ENCODE measurements at regions of chr10 and their contacts with region 1.

Region 1: GRCh38 chr10:12369982-12370381 is 20.6 kb downstream of the CAMK1D start:
- DNase-seq: no peak
- H3K4me3 Mint-ChIP-seq: no peak overlapping the region
- H3K27ac Mint-ChIP-seq: no peak overlapping the region
- H3K4me1 Mint-ChIP-seq: peaks cover 17% of the 10 kb centered on the region
- H3K27me3 Mint-ChIP-seq: no peaks in the 10 kb centered on the region

Region 2: GRCh38 chr10:11724938-11725776 is 644.8 kb before region 1 on chr10:
- intact Hi-C with region 1: loop called (anchors 5 kb)
- DNase-seq: peak; percentile 70
- H3K4me3 Mint-ChIP-seq: no peak overlapping the region
- H3K27ac Mint-ChIP-seq: no peak overlapping the region
- H3K4me1 Mint-ChIP-seq: peaks cover 4% of the 10 kb centered on the region
- H3K27me3 Mint-ChIP-seq: peaks cover 49% of the 10 kb centered on the region

Region 3: GRCh38 chr10:11986593-11987216 is 383.3 kb before region 1 on chr10:
- intact Hi-C with region 1: no loop called
- DNase-seq: peak; percentile 91
- H3K4me3 Mint-ChIP-seq: no peak overlapping the region
- H3K27ac Mint-ChIP-seq: peak overlapping the region; percentile 60
- H3K4me1 Mint-ChIP-seq: peaks cover 6% of the 10 kb centered on the region
- H3K27me3 Mint-ChIP-seq: no peaks in the 10 kb centered on the region

Region 4: GRCh38 chr10:12121673-12122072 is 248.3 kb before region 1 on chr10:
- intact Hi-C with region 1: no loop called
- DNase-seq: no peak
- H3K4me3 Mint-ChIP-seq: peak overlapping the region; percentile 79
- H3K27ac Mint-ChIP-seq: peak overlapping the region; percentile 97
- H3K4me1 Mint-ChIP-seq: peaks cover 27% of the 10 kb centered on the region
- H3K27me3 Mint-ChIP-seq: no peaks in the 10 kb centered on the region

Region 5: GRCh38 chr10:12252882-12253546 is 117.0 kb before region 1 on chr10:
- intact Hi-C with region 1: no loop called
- DNase-seq: peak; percentile 70
- H3K4me3 Mint-ChIP-seq: no peak overlapping the region
- H3K27ac Mint-ChIP-seq: no peak overlapping the region
- H3K4me1 Mint-ChIP-seq: no peaks in the 10 kb centered on the region
- H3K27me3 Mint-ChIP-seq: no peaks in the 10 kb centered on the region

Region 6: GRCh38 chr10:12348870-12349628 is 20.9 kb before region 1 on chr10 and contains the start of gene CAMK1D:
- intact Hi-C with region 1: loop called (anchors 1 kb)
- DNase-seq: peak; percentile 95
- H3K4me3 Mint-ChIP-seq: peak within 1 kb of the TSS; percentile 90
- H3K27ac Mint-ChIP-seq: peak within 1 kb of the TSS; percentile 97
- H3K4me1 Mint-ChIP-seq: peaks cover 34% of the 10 kb centered on the region
- H3K27me3 Mint-ChIP-seq: peaks cover 53% of the 10 kb centered on the region
- total RNA-seq, gene CAMK1D: 5.6 and 6.6 TPM in 2 replicates

Region 7: DNA sequence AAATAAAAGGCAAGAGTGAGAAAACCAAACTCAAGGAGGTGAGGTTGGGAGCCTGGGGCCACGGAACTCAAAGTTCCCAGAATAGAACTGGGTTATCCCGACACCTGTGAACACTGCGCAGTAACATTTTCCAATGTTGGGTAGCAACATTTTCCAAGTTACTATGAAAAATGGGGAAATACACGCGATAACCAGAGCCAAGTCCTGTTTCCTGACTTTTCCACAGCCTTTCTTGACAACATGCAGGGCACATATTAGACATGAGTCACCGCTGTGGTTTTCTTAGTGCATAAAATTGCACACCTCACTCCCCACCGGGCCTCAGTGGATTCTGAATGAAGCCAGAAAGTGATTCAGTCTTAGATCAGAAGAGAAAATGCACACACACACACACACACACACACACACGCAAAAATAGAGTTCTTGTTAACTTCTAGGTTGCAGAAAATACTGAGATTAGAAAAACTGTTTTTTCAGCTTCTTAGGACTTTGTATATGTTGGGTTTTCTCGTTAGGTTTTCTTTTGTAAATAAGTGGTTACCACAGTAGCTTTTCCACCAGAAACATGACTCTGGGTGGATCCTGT is 49.4 kb after region 1 on chr10:
- intact Hi-C with region 1: loop called (anchors 1 kb)
- DNase-seq: peak; percentile 78
- H3K4me3 Mint-ChIP-seq: no peak overlapping the region
- H3K27ac Mint-ChIP-seq: peak overlapping the region; percentile 58
- H3K4me1 Mint-ChIP-seq: peaks cover 12% of the 10 kb centered on the region
- H3K27me3 Mint-ChIP-seq: peaks cover 2% of the 10 kb centered on the region

Region 8: GRCh38 chr10:12663863-12664262 is 293.9 kb after region 1 on chr10:
- intact Hi-C with region 1: no loop called
- DNase-seq: no peak
- H3K4me3 Mint-ChIP-seq: no peak overlapping the region
- H3K27ac Mint-ChIP-seq: no peak overlapping the region
- H3K4me1 Mint-ChIP-seq: peaks cover 8% of the 10 kb centered on the region
- H3K27me3 Mint-ChIP-seq: peaks cover 1% of the 10 kb centered on the region